HCT116 (cell line): ENCODE measurements at regions of chr6 and their contacts with region 1.

Region 1: DNA sequence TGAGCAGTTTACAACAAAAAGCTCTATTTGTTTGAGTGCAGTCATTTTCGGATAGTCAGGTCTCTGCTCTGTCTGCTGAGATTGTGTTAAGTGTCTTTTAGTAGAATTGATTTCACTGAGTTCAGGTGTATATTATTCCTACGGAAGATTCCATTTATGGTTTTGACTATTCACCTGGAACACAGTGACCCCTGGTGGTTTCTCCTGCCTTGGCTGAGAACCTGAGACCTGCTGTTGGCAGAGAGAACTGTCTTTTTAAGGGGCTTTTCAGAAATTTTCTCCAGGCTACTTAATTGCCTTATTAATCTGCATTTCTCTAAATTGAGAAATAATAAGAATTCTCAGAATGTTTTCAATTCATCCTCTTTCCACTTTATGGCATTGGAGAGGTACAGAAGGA is 508.0 kb downstream of the TBC1D32 start:
- DNase-seq: peak; percentile 53
- ATAC-seq: peak; percentile 87
- H3K4me3 ChIP-seq: no peak overlapping the region
- H3K27ac ChIP-seq: no peak overlapping the region
- H3K4me1 ChIP-seq: no peaks in the 10 kb centered on the region
- H3K27me3 ChIP-seq: no peaks in the 10 kb centered on the region
- CTCF ChIP-seq: peak; percentile 65 to 84 (median 84); a peak in 5 of 6 replicates
- POLR2A ChIP-seq: no peak
- RAD21 ChIP-seq: peak; percentile 79

Region 2: GRCh38 chr6:120405947-120406346 is 420.3 kb before region 1 on chr6:
- CTCF ChIA-PET with region 1: no interaction called
- POLR2A ChIA-PET with region 1: no interaction called
- RAD21 ChIA-PET with region 1: no interaction called
- intact Hi-C with region 1: loop called (anchors 1 kb)
- DNase-seq: peak; percentile 13
- ATAC-seq: peak; percentile 84
- H3K4me3 ChIP-seq: no peak overlapping the region
- H3K27ac ChIP-seq: no peak overlapping the region
- H3K4me1 ChIP-seq: no peaks in the 10 kb centered on the region
- H3K27me3 ChIP-seq: no peaks in the 10 kb centered on the region
- CTCF ChIP-seq: peak; percentile 41 to 60 (median 52); a peak in 5 of 6 replicates
- POLR2A ChIP-seq: no peak
- RAD21 ChIP-seq: peak; percentile 59

Region 3: GRCh38 chr6:121531658-121532169 is 705.5 kb after region 1 on chr6:
- CTCF ChIA-PET with region 1: no interaction called
- POLR2A ChIA-PET with region 1: no interaction called
- RAD21 ChIA-PET with region 1: no interaction called
- intact Hi-C with region 1: no loop called
- DNase-seq: no peak
- ATAC-seq: no peak
- H3K4me3 ChIP-seq: no peak overlapping the region
- H3K27ac ChIP-seq: no peak overlapping the region
- H3K4me1 ChIP-seq: no peaks in the 10 kb centered on the region
- H3K27me3 ChIP-seq: no peaks in the 10 kb centered on the region
- CTCF ChIP-seq: no peak
- POLR2A ChIP-seq: no peak
- RAD21 ChIP-seq: no peak